ENCODE measurements at regions of chr10 and their contacts with region 1.

Region 1: DNA sequence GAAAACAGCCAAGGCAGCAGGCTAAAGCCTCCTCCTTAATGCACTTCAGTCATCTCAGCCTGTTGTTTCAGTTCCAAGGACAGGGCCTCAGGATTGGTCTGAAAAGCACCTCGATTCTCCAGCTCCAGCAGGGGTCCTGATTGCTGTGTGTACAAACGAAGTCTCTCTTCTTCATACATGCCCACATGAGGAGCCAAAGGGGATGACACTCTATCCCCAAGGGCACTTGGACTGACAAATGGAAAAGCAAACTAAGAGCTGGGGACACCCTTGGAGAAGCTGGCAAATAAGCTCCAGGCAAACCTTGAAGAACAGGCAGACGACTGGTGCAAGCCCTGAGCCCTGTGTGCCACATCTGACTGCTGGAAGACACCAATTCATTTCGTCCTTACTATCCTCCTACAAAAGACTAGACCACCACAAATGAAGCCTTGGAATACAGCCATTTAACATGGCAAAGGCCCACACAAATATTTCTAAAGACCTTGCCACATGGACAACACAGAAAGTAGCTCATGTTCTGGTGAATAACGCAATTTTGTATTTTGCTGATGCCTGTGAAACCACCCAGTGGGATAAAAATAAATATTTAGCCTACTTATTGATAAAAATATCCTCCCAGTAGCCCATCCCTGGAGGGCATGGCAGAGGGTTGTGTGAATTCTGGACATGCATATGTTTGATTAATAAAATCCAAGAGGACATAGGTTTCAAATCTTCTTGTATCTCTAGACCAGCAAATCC is 61.9 kb downstream of the PARD3 start:
- DNase-seq: no peak
- ATAC-seq: no peak
- H3K4me3 ChIP-seq: no peak overlapping the region
- H3K27ac ChIP-seq: no peak overlapping the region
- H3K4me1 ChIP-seq: no peaks in the 10 kb centered on the region
- H3K27me3 ChIP-seq: no peaks in the 10 kb centered on the region; a peak in 2 of 4 replicates
- CTCF ChIP-seq: no peak
- EP300 ChIP-seq: no peak
- POLR2A ChIP-seq: no peak
- RAD21 ChIP-seq: no peak

Region 2: DNA sequence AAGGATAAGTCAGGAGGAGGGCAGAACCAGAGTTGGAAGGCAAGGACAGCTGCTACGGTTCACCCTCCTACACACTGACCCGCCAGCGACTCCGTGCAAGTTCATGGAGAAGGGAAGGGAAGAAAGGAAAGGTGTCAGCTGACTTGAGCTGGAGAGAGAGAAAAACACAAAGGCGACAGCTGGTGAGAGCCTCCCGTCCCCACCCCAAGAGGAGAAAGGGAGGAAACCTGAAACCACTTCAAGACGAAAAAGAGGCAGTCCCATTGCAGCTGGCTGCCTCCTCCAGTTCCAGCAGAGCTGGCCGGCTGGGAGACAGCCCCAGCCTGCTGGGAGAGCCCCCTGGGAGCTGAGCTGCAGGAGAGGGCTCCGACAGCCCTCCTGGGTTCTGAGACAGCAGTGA is 13.3 kb before region 1 on chr10:
- CTCF ChIA-PET with region 1: interaction called, 90 read pairs
- POLR2A ChIA-PET with region 1: interaction called, 8 read pairs
- RAD21 ChIA-PET with region 1: interaction called, 11 read pairs
- SMC1A ChIA-PET with region 1: interaction called, 56 read pairs
- in situ Hi-C with region 1: no loop called
- intact Hi-C with region 1: no loop called
- DNase-seq: no peak
- ATAC-seq: peak; percentile 28
- H3K4me3 ChIP-seq: no peak overlapping the region
- H3K27ac ChIP-seq: no peak overlapping the region
- H3K4me1 ChIP-seq: no peaks in the 10 kb centered on the region
- H3K27me3 ChIP-seq: peaks cover 0 to 11% of the 10 kb centered on the region in 2 experiments; a peak in 2 of 4 replicates
- CTCF ChIP-seq: no peak
- EP300 ChIP-seq: no peak
- POLR2A ChIP-seq: no peak
- RAD21 ChIP-seq: no peak

Region 3: DNA sequence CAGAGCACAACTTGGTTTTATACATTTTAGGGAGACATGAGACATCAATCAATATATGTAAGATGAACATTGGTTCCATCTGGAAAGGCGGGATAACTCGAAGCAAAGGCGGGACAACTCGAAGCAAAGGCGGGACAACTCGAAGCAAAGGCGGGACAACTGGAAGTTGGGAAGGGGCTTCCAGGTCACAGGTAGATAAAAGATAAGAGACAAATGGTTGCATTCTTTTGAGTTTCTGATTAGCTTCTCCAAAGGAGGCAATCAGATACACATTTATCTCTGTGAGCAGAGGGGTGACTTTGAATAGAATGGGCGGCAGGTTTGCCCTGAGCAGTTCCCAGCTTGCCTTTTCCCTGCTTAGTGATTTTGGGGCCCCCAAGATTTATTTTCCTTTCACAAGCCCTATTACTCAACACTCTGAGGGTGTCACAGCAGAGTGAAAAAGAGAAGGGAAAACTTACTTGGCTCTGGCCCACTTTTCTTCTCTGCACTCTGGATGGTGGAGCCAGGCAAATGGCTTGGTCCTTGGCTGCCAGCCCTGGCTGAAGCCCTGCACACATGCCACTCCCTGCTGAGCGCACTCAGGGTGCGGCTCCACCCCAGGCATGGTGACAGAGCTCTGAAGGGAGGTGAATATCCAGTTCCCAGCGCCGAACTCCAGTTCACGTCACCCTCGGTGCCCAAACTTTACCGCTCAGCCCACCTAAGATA is 15.2 kb after region 1 on chr10:
- CTCF ChIA-PET with region 1: interaction called, 5 read pairs
- POLR2A ChIA-PET with region 1: interaction called, 8 read pairs
- RAD21 ChIA-PET with region 1: interaction called, 7 read pairs
- SMC1A ChIA-PET with region 1: interaction called, 33 read pairs
- in situ Hi-C with region 1: no loop called
- intact Hi-C with region 1: no loop called
- DNase-seq: no peak
- ATAC-seq: peak; percentile 11; the same call in 1 of the 3 replicates
- H3K4me3 ChIP-seq: no peak overlapping the region
- H3K27ac ChIP-seq: no peak overlapping the region
- H3K4me1 ChIP-seq: no peaks in the 10 kb centered on the region
- H3K27me3 ChIP-seq: no peaks in the 10 kb centered on the region
- CTCF ChIP-seq: no peak
- EP300 ChIP-seq: no peak
- POLR2A ChIP-seq: no peak
- RAD21 ChIP-seq: no peak